ENCODE measurements at regions of chr13 and their contacts with region 1.

Region 1: GRCh38 chr13:21603531-21604448 is at the start of gene MICU2:
- DNase-seq: peak; percentile 97
- H3K4me3 Mint-ChIP-seq: peak within 1 kb of the TSS; percentile 81
- H3K27ac Mint-ChIP-seq: peak within 1 kb of the TSS; percentile 89
- H3K4me1 Mint-ChIP-seq: peaks cover 26% of the 10 kb centered on the region
- H3K27me3 Mint-ChIP-seq: peaks cover 5% of the 10 kb centered on the region
- total RNA-seq, gene MICU2: 32.6 to 33.3 TPM

Region 2: GRCh38 chr13:21579754-21580316 is 24.0 kb before region 1 on chr13:
- CTCF ChIA-PET with region 1: interaction called, 3 read pairs
- POLR2A ChIA-PET with region 1: interaction called, 3 read pairs
- intact Hi-C with region 1: loop called (anchors 1 kb)
- DNase-seq: no peak
- H3K4me3 Mint-ChIP-seq: no peak overlapping the region
- H3K27ac Mint-ChIP-seq: peak overlapping the region; percentile 20
- H3K4me1 Mint-ChIP-seq: peaks cover 39% of the 10 kb centered on the region
- H3K27me3 Mint-ChIP-seq: no peaks in the 10 kb centered on the region